Caco-2 (cell line): ENCODE measurements at regions of chr1 and their contacts with region 1.

Region 1: DNA sequence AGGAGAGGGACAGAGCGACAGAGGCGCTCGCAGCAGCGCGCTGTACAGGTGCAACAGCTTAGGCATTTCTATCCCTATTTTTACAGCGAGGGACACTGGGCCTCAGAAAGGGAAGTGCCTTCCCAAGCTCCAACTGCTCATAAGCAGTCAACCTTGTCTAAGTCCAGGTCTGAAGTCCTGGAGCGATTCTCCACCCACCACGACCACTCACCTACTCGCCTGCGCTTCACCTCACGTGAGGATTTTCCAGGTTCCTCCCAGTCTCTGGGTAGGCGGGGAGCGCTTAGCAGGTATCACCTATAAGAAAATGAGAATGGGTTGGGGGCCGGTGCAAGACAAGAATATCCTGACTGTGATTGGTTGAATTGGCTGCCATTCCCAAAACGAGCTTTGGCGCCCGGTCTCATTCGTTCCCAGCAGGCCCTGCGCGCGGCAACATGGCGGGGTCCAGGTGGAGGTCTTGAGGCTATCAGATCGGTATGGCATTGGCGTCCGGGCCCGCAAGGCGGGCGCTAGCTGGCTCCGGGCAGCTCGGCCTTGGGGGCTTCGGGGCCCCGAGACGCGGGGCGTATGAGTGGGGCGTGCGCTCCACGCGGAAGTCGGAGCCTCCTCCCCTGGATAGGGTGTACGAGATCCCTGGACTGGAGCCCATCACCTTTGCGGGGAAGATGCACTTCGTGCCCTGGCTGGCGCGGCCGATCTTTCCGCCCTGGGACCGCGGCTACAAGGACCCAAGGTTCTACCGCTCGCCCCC is at the starts of genes CYB5RL and MRPL37:
- DNase-seq: peak; percentile 92 to 94
- H3K4me3 ChIP-seq: peak within 1 kb of the TSS; percentile 78
- H3K4me3 Mint-ChIP-seq: peak within 1 kb of the TSS; percentile 90
- H3K27ac Mint-ChIP-seq: peak within 1 kb of the TSS; percentile 80
- H3K4me1 ChIP-seq: 0 out of 2 replicates have a peak, but pooled peaks cover 3% of the 10 kb centered on the region
- H3K4me1 Mint-ChIP-seq: peaks cover 8% of the 10 kb centered on the region
- H3K27me3 ChIP-seq: no peaks in the 10 kb centered on the region
- H3K27me3 Mint-ChIP-seq: no peaks in the 10 kb centered on the region
- CTCF ChIP-seq: no peak
- total RNA-seq, gene CYB5RL: 10.0 and 10.8 TPM in 2 replicates
- total RNA-seq, gene MRPL37: 95.4 and 95.6 TPM in 2 replicates

Region 2: GRCh38 chr1:54070171-54070837 is 129.6 kb before region 1 on chr1:
- CTCF ChIA-PET with region 1: interaction called, 12 read pairs
- POLR2A ChIA-PET with region 1: no interaction called
- intact Hi-C with region 1: no loop called
- DNase-seq: peak in 1 of 2 experiments; percentile 15
- H3K4me3 ChIP-seq: no peak overlapping the region
- H3K4me3 Mint-ChIP-seq: no peak overlapping the region
- H3K27ac Mint-ChIP-seq: no peak overlapping the region
- H3K4me1 ChIP-seq: no peaks in the 10 kb centered on the region
- H3K4me1 Mint-ChIP-seq: peaks cover 7% of the 10 kb centered on the region
- H3K27me3 ChIP-seq: no peaks in the 10 kb centered on the region
- H3K27me3 Mint-ChIP-seq: no peaks in the 10 kb centered on the region
- CTCF ChIP-seq: peak in 1 of 2 experiments; percentile 72